Activated CD8-positive, alpha-beta T cell treated with anti-CD3 and anti-CD28 coated beads, Interleukin-2, amount 10 ng/mL, durations not matched to agents 7 days and 5 days (primary cell): ENCODE measurements at regions of chr6 and their contacts with region 1.

Region 1: DNA sequence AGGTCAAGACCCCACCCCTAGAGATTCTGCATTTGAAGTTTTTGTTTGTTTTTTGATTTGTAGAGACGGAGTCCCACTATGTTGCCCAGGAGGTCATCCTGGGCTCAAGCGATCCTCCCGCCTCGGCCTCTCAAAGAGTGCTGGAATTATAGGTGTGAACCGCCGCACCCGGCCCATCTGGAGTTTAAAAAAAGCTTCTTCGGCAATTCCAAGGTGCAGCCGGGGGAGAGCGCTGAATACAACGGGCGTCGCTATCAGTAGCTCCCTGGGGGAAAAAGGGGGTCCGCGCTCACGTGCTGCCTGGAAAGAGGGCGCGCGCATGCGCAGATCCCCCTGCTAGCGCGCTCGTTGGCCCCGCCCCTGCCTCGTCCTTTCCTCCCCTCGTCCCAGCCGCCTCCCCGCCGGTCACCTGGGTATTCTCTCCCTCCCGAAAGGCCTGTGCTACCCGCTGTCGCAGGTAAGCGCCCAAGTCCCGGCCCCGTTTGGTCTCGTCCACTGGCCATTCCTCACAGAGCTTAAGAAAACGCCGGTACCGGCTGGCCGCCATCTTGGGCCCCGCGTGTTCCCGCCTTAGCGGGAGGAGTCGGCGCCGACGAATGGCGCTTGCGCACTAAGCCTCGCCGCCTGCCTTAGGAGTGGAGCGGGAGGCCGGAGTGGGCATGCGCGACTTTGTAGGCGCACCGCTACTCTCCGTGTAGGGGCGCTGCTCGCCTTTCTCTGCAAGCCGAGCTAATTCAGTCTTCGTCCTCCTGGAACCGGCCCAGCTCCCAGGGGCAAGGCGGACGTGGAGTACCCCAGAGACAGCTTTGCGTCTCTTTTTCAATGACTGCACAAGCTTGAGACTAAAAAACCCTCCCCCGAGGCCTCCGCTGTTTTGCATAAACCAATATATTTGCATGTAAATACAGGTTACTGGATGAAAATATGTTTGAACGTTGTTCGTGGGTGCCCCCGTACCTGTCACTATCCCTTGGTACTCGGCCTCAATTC is at the start of gene UQCC2:
- DNase-seq: peak; percentile 98
- ATAC-seq: peak; percentile 99
- H3K4me3 Mint-ChIP-seq: peak within 1 kb of the TSS; percentile 96
- H3K27ac Mint-ChIP-seq: peak within 1 kb of the TSS; percentile 98
- H3K4me1 Mint-ChIP-seq: peaks cover 43% of the 10 kb centered on the region
- H3K27me3 Mint-ChIP-seq: peaks cover 7% of the 10 kb centered on the region
- total RNA-seq, gene UQCC2: 88.1 to 89.6 TPM

Region 2: GRCh38 chr6:33694401-33694931 is 17.0 kb before region 1 on chr6:
- CTCF ChIA-PET with region 1: interaction called, 19 read pairs
- POLR2A ChIA-PET with region 1: interaction called, 6 read pairs
- DNase-seq: peak; percentile 70
- ATAC-seq: peak; percentile 64
- H3K4me3 Mint-ChIP-seq: peak overlapping the region; percentile 49
- H3K27ac Mint-ChIP-seq: peak overlapping the region; percentile 92
- H3K4me1 Mint-ChIP-seq: peaks cover 84% of the 10 kb centered on the region
- H3K27me3 Mint-ChIP-seq: no peaks in the 10 kb centered on the region

Region 3: GRCh38 chr6:33724281-33725023 is 13.0 kb after region 1 on chr6:
- CTCF ChIA-PET with region 1: interaction called, 12 read pairs
- POLR2A ChIA-PET with region 1: interaction called, 4 read pairs
- DNase-seq: no peak
- ATAC-seq: no peak
- H3K4me3 Mint-ChIP-seq: no peak overlapping the region
- H3K27ac Mint-ChIP-seq: no peak overlapping the region
- H3K4me1 Mint-ChIP-seq: peaks cover 12% of the 10 kb centered on the region
- H3K27me3 Mint-ChIP-seq: peaks cover 29% of the 10 kb centered on the region

Region 4: GRCh38 chr6:33761922-33762629 is 50.6 kb after region 1 on chr6:
- CTCF ChIA-PET with region 1: interaction called, 25 read pairs
- POLR2A ChIA-PET with region 1: interaction called, 4 read pairs
- DNase-seq: peak; percentile 67
- ATAC-seq: peak; percentile 80
- H3K4me3 Mint-ChIP-seq: no peak overlapping the region
- H3K27ac Mint-ChIP-seq: no peak overlapping the region
- H3K4me1 Mint-ChIP-seq: peaks cover 13% of the 10 kb centered on the region
- H3K27me3 Mint-ChIP-seq: no peaks in the 10 kb centered on the region